ENCODE measurements at regions of chr3 and their contacts with region 1.

Region 1: GRCh38 chr3:37653466-37654020 is 208.1 kb upstream of the CTDSPL start:
- DNase-seq: no peak
- ATAC-seq: no peak
- H3K4me3 ChIP-seq: no peak overlapping the region
- H3K4me3 Mint-ChIP-seq: no peak overlapping the region
- H3K27ac ChIP-seq: no peak overlapping the region
- H3K27ac Mint-ChIP-seq: no peak overlapping the region
- H3K4me1 ChIP-seq: no peaks in the 10 kb centered on the region
- H3K4me1 Mint-ChIP-seq: no peaks in the 10 kb centered on the region
- H3K27me3 ChIP-seq: no peaks in the 10 kb centered on the region
- H3K27me3 Mint-ChIP-seq: peaks cover 4 to 15% (median 10%) of the 10 kb centered on the region in 5 donors

Region 2: GRCh38 chr3:37580237-37580636 is 73.3 kb before region 1 on chr3:
- CTCF ChIA-PET with region 1: no interaction called
- POLR2A ChIA-PET with region 1: no interaction called
- intact Hi-C with region 1: loop called in 1 of 2 experiments (anchors 2 kb)
- DNase-seq: no peak
- ATAC-seq: no peak
- H3K4me3 ChIP-seq: no peak overlapping the region
- H3K4me3 Mint-ChIP-seq: no peak overlapping the region
- H3K27ac ChIP-seq: no peak overlapping the region
- H3K27ac Mint-ChIP-seq: no peak overlapping the region
- H3K4me1 ChIP-seq: no peaks in the 10 kb centered on the region
- H3K4me1 Mint-ChIP-seq: no peaks in the 10 kb centered on the region
- H3K27me3 ChIP-seq: no peaks in the 10 kb centered on the region
- H3K27me3 Mint-ChIP-seq: peaks cover 4 to 9% (median 9%) of the 10 kb centered on the region in 5 donors

Region 3: GRCh38 chr3:38623539-38623938 is 970.0 kb after region 1 on chr3:
- CTCF ChIA-PET with region 1: no interaction called
- POLR2A ChIA-PET with region 1: no interaction called
- intact Hi-C with region 1: no loop called
- DNase-seq: no peak
- ATAC-seq: peak; percentile 11
- H3K4me3 ChIP-seq: no peak overlapping the region
- H3K4me3 Mint-ChIP-seq: no peak overlapping the region
- H3K27ac ChIP-seq: no peak overlapping the region
- H3K27ac Mint-ChIP-seq: no peak overlapping the region
- H3K4me1 ChIP-seq: no peaks in the 10 kb centered on the region
- H3K4me1 Mint-ChIP-seq: no peaks in the 10 kb centered on the region
- H3K27me3 ChIP-seq: no peaks in the 10 kb centered on the region
- H3K27me3 Mint-ChIP-seq: no peaks in the 10 kb centered on the region